Activated CD4-positive, alpha-beta T cell treated with anti-CD3 and anti-CD28 coated beads for 36 hours (primary cell): ENCODE measurements at regions of chr1 and their contacts with region 1.

Region 1: GRCh38 chr1:236753516-236753915 is 41.6 kb upstream of the MTR start:
- DNase-seq: peak; percentile 11
- ATAC-seq: no peak
- H3K4me3 Mint-ChIP-seq: no peak overlapping the region
- H3K27ac Mint-ChIP-seq: no peak overlapping the region
- H3K4me1 Mint-ChIP-seq: no peaks in the 10 kb centered on the region
- H3K27me3 Mint-ChIP-seq: peaks cover 9% of the 10 kb centered on the region

Region 2: DNA sequence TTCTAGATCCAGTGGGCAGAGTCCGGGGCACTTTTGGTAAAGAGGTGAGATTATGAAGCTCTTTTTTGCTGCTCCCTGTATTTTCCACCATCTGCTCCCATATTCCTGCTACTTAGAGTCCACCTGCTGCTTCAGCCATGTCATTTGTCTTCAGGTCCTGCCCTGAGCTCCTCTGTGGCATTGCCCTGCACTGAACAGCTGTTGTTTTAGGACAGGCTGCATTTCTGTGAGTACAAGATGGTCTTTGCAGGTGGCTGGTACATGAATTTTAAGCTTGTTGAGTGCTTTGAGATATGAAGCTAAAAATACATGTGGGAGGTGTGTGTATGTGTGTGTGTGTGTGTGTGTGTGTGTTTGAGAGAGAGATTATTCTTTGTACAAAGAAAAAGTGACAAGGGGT is 228.9 kb after region 1 on chr1:
- CTCF ChIA-PET with region 1: no interaction called
- POLR2A ChIA-PET with region 1: interaction called, 3 read pairs
- intact Hi-C with region 1: loop called in 1 of 2 experiments (anchors 5 kb)
- DNase-seq: no peak
- ATAC-seq: no peak
- H3K4me3 Mint-ChIP-seq: no peak overlapping the region
- H3K27ac Mint-ChIP-seq: no peak overlapping the region
- H3K4me1 Mint-ChIP-seq: no peaks in the 10 kb centered on the region
- H3K27me3 Mint-ChIP-seq: peaks cover 5% of the 10 kb centered on the region

Region 3: DNA sequence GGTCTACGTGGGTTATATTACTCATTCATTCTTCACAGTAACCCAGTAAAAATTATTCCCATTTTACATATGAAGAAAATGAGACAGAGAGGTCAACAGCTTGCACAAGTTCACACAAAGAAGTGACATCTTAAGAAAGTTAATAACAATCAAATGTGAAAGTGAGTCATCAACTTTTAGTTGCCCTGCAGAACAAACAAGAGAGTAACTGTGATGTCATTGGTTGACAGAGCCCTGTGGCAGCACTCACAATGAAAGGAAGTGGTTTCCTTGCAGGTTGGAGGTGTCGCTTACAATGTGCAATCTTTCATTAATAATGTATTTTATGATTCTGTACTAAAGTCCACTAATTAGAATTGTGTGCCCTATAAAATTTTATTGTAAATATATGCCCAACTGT is 658.1 kb after region 1 on chr1:
- CTCF ChIA-PET with region 1: no interaction called
- POLR2A ChIA-PET with region 1: no interaction called
- intact Hi-C with region 1: no loop called
- DNase-seq: peak; percentile 8
- ATAC-seq: peak; percentile 58
- H3K4me3 Mint-ChIP-seq: no peak overlapping the region
- H3K27ac Mint-ChIP-seq: no peak overlapping the region
- H3K4me1 Mint-ChIP-seq: peaks cover 2% of the 10 kb centered on the region
- H3K27me3 Mint-ChIP-seq: no peaks in the 10 kb centered on the region